ENCODE measurements at regions of chr2 and their contacts with region 1.

Region 1: GRCh38 chr2:227671170-227672060 is 4.8 kb downstream of the SCYGR5 start:
- DNase-seq: no peak
- ATAC-seq: no peak
- H3K4me3 ChIP-seq: no peak overlapping the region
- H3K27ac ChIP-seq: no peak overlapping the region
- H3K4me1 ChIP-seq: peaks cover 5% of the 10 kb centered on the region; the same call in 1 of the 2 replicates
- H3K27me3 ChIP-seq: no peaks in the 10 kb centered on the region
- CTCF ChIP-seq: no peak
- EP300 ChIP-seq: no peak
- POLR2A ChIP-seq: no peak
- RAD21 ChIP-seq: no peak

Region 2: GRCh38 chr2:227687189-227687588 is 15.8 kb after region 1 on chr2:
- CTCF ChIA-PET with region 1: no interaction called
- POLR2A ChIA-PET with region 1: no interaction called
- in situ Hi-C with region 1: no loop called
- intact Hi-C with region 1: no loop called
- DNase-seq: no peak
- ATAC-seq: no peak
- H3K4me3 ChIP-seq: no peak overlapping the region
- H3K27ac ChIP-seq: no peak overlapping the region
- H3K4me1 ChIP-seq: no peaks in the 10 kb centered on the region
- H3K27me3 ChIP-seq: no peaks in the 10 kb centered on the region
- CTCF ChIP-seq: no peak
- EP300 ChIP-seq: no peak
- POLR2A ChIP-seq: no peak
- RAD21 ChIP-seq: no peak

Region 3: DNA sequence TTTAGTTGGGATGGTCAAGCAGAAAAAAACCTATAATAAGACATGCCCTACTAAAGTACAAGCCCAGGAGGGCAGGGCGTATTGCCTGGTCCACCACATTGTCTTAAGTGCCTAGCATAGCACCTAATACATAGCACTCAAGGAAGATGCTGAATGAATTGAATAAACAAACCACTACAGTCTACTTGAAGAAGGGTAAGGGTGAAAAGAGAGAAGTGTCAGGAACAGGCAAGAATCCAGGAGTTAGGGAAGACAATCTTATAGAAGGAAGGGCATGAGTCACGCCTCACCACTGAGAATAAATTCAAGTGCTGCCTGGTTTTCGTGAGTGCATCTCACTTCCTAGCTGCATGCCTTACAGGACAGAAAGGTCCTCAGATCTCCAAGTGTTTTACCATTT is 32.5 kb after region 1 on chr2:
- CTCF ChIA-PET with region 1: no interaction called
- POLR2A ChIA-PET with region 1: no interaction called
- in situ Hi-C with region 1: no loop called
- intact Hi-C with region 1: loop called (anchors 1 kb)
- DNase-seq: no peak
- ATAC-seq: no peak
- H3K4me3 ChIP-seq: no peak overlapping the region
- H3K27ac ChIP-seq: no peak overlapping the region
- H3K4me1 ChIP-seq: peaks cover 30% of the 10 kb centered on the region
- H3K27me3 ChIP-seq: no peaks in the 10 kb centered on the region
- CTCF ChIP-seq: no peak
- EP300 ChIP-seq: no peak
- POLR2A ChIP-seq: no peak
- RAD21 ChIP-seq: no peak

Region 4: GRCh38 chr2:227739351-227739750 is 67.9 kb after region 1 on chr2:
- CTCF ChIA-PET with region 1: no interaction called
- POLR2A ChIA-PET with region 1: no interaction called
- in situ Hi-C with region 1: no loop called
- intact Hi-C with region 1: no loop called
- DNase-seq: no peak
- ATAC-seq: no peak
- H3K4me3 ChIP-seq: no peak overlapping the region
- H3K27ac ChIP-seq: no peak overlapping the region
- H3K4me1 ChIP-seq: peaks cover 15% of the 10 kb centered on the region; the same call in 1 of the 2 replicates
- H3K27me3 ChIP-seq: peaks cover 0 to 8% of the 10 kb centered on the region in 2 experiments; a peak in 2 of 5 replicates
- CTCF ChIP-seq: no peak
- EP300 ChIP-seq: no peak
- POLR2A ChIP-seq: no peak
- RAD21 ChIP-seq: no peak

Measured in HepG2 (cell line).